MCF 10A (cell line): ENCODE measurements at regions of chr5 and their contacts with region 1.

Region 1: GRCh38 chr5:25006737-25007302 is 362.0 kb upstream of the CDH10 start:
- DNase-seq: peak; percentile 70
- H3K4me3 Mint-ChIP-seq: no peak overlapping the region
- H3K27ac Mint-ChIP-seq: no peak overlapping the region
- H3K4me1 Mint-ChIP-seq: no peaks in the 10 kb centered on the region
- H3K27me3 Mint-ChIP-seq: no peaks in the 10 kb centered on the region
- CTCF ChIP-seq: peak; percentile 44

Region 2: DNA sequence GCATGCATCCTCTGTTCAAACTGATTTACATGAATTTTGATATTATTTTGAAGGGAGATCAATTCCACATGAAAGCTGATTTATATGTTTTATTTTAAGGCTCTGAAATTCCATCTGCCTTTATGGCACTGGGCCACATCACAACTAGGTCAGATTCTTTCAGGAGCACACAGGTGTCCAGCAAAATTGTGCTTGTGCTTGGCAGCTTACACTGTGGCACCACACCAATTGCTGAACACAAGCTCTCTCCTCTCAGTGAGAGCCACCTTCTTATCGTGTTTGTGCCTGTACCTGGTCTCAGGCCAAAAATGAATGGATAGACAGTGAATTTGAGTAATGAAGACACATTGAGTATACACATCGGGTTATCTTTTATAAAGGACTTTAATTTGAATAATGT is 562.4 kb before region 1 on chr5:
- CTCF ChIA-PET with region 1: no interaction called
- POLR2A ChIA-PET with region 1: no interaction called
- intact Hi-C with region 1: loop called (anchors 10 kb)
- DNase-seq: no peak
- H3K4me3 Mint-ChIP-seq: no peak overlapping the region
- H3K27ac Mint-ChIP-seq: no peak overlapping the region
- H3K4me1 Mint-ChIP-seq: peaks cover 6% of the 10 kb centered on the region
- H3K27me3 Mint-ChIP-seq: no peaks in the 10 kb centered on the region
- CTCF ChIP-seq: no peak